PC-3 (cell line): ENCODE measurements at regions of chr12 and their contacts with region 1.

Region 1: DNA sequence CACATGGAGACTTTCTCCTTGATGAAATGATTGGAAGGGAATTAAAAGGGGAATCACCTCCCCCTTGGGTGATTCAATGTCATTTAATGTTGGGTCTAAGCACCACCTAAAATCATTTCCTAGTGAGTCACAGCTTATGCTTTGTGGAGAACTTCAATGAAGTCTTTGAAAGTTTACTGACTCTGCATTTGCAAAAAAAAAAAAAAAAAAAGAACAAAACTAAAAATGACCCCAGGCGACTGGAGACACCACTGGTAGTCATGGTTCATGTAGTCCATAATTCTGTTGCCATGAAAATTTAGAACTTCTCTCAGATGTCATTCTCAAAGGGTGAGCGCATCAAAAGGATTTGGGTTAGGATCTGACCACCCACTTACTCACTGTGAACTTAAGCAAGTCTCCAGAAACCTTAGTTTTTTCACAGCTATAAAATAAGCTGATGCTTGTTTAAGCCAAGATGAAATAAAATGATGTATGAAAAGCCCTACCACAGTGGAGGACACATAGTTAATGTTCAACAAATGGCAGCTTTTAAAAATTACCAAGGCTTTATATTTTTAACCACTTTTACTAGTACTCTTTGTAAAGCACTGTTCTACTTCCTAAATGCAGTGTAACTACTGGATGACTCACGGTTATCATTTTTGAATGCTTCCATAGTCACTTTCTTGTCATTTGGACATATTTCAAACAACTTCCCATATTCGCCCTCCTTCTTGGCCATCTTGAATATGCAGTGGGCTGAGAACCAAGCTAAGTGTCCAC is 18.1 kb upstream of the KSR2 start:
- DNase-seq: peak; percentile 94
- ATAC-seq: peak; percentile 81
- H3K4me3 ChIP-seq: peak overlapping the region; percentile 14; the same call in 1 of the 2 replicates
- H3K27ac ChIP-seq: peak overlapping the region; percentile 91
- H3K4me1 ChIP-seq: peaks cover 36% of the 10 kb centered on the region
- H3K27me3 ChIP-seq: no peaks in the 10 kb centered on the region
- CTCF ChIP-seq: no peak

Region 2: DNA sequence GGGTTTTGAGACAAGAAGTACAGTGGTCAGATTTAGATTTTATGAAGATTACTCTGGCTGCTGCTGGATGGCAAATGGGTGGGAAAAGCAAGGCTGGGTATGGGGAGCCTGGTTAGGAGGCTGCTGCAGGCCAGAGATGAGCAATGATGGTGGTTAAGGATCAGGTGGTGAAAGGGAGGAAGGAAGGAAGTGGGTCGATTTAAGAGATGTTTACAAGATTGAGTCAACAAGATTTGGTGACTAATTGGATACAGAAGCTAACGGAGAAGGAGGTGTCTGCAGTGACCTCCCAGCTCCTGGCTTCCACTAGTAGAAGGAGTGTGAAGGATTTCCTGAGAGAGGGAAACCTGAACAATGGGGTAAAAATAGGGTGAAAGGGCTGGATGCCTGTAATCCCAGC is 644.2 kb before region 1 on chr12:
- CTCF ChIA-PET with region 1: no interaction called
- POLR2A ChIA-PET with region 1: interaction called, 29 read pairs
- intact Hi-C with region 1: no loop called
- DNase-seq: peak; percentile 96
- ATAC-seq: peak; percentile 94
- H3K4me3 ChIP-seq: no peak overlapping the region
- H3K27ac ChIP-seq: peak overlapping the region; percentile 77
- H3K4me1 ChIP-seq: peaks cover 32% of the 10 kb centered on the region
- H3K27me3 ChIP-seq: peaks cover 12% of the 10 kb centered on the region
- CTCF ChIP-seq: no peak

Region 3: DNA sequence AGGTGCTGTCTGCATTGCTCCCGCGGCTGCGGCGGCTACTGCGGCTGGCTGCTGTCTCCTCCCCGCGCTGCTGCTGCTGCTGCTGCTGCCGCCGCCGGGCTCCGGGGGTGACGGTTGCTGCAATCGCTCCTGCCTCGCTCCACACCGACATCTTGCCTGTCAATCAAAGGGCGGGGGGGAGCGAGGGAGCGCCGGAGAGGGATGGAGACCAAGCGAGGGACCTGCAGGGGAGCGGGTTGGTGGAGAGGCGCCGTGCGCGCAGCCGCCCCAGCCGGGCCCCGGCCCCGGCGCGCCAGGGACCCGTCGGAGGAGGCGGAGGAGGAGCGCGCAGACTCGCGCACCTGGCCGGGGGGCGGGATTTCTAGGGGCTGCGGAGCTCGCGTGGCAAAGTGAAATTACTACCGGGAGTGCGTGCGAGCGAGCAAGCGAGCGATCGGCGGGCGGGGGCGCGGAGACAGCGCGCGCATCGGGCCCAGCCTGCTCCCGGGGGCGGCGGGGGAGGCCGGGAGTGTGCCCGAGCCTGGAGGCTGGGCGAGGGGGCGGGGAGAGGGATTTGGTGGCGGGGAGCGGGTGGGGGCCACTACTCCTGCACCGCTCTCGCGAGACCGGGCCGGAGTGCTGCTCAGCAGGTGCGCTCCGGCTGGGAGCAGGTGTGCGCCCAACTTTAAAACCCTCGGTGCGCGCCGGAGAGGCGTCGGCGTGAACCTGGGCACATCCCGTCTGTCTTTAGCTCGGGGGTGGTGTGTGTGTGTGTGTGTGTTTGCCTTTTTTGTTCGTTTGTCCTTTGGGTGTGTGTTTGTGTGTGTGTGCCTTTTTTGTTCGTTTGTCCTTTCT is 17.8 kb before region 1 on chr12 and contains the start of gene KSR2:
- CTCF ChIA-PET with region 1: no interaction called
- POLR2A ChIA-PET with region 1: interaction called, 6 read pairs
- intact Hi-C with region 1: loop called (anchors 2 kb)
- DNase-seq: peak; percentile 92
- ATAC-seq: peak; percentile 91
- H3K4me3 ChIP-seq: peak within 1 kb of the TSS; percentile 89
- H3K27ac ChIP-seq: peak within 1 kb of the TSS; percentile 68
- H3K4me1 ChIP-seq: peaks cover 24% of the 10 kb centered on the region
- H3K27me3 ChIP-seq: no peaks in the 10 kb centered on the region
- CTCF ChIP-seq: no peak
- total RNA-seq, gene KSR2: 0.80 and 2.8 TPM in 2 replicates

Region 4: DNA sequence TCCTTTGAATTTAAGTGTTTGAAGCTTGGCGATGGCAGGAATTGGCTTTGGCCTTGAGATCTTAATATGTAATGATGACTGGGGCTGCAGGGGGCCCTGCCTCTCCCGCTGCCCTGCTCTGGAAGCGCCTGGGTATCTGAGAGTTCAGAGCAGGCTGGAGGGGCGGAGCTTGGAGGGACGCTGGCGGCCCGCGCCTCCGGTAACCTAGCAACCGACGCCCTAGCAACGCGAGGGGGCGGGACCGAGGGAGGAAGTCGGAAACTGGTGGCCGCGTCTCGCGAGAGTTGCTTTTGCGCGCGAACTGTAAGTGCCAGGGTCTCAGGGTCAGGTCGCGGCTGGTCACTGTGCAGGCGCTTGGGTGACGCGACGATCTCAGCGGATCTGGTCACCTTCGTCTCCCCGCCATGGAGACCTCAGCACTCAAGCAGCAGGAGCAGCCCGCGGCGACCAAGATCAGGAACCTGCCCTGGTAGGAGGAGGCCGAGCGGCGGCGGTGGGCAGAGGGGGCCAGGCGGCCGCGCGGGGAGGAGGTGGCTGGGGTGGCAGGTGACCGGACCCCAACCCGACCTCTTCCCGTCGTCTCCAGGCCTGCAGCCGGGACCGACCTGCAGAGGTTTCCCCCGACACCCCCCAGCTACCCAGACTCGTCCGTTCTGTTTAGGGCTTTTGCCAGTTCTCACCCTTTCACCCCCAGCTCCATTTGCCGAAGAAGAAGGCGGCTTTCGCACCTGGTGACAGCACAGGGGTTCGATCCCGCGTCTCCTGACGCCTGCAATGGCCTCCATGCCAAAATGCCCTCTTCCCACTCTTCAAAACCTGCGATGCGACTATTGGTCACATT is 29.8 kb after region 1 on chr12 and contains the start of gene RFC5:
- CTCF ChIA-PET with region 1: no interaction called
- POLR2A ChIA-PET with region 1: no interaction called
- intact Hi-C with region 1: loop called (anchors 2 kb)
- DNase-seq: peak; percentile 99
- ATAC-seq: peak; percentile 99
- H3K4me3 ChIP-seq: peak within 1 kb of the TSS; percentile 95
- H3K27ac ChIP-seq: peak within 1 kb of the TSS; percentile 17
- H3K4me1 ChIP-seq: peaks cover 18% of the 10 kb centered on the region
- H3K27me3 ChIP-seq: no peaks in the 10 kb centered on the region
- CTCF ChIP-seq: no peak
- total RNA-seq, gene RFC5: 86.4 and 100 TPM in 2 replicates

Region 5: GRCh38 chr12:118055144-118055557 is 68.3 kb after region 1 on chr12:
- CTCF ChIA-PET with region 1: no interaction called
- POLR2A ChIA-PET with region 1: interaction called, 27 read pairs
- intact Hi-C with region 1: no loop called
- DNase-seq: peak; percentile 78
- ATAC-seq: no peak
- H3K4me3 ChIP-seq: no peak overlapping the region
- H3K27ac ChIP-seq: no peak overlapping the region
- H3K4me1 ChIP-seq: peaks cover 64% of the 10 kb centered on the region
- H3K27me3 ChIP-seq: no peaks in the 10 kb centered on the region
- CTCF ChIP-seq: peak; percentile 91

Region 6: DNA sequence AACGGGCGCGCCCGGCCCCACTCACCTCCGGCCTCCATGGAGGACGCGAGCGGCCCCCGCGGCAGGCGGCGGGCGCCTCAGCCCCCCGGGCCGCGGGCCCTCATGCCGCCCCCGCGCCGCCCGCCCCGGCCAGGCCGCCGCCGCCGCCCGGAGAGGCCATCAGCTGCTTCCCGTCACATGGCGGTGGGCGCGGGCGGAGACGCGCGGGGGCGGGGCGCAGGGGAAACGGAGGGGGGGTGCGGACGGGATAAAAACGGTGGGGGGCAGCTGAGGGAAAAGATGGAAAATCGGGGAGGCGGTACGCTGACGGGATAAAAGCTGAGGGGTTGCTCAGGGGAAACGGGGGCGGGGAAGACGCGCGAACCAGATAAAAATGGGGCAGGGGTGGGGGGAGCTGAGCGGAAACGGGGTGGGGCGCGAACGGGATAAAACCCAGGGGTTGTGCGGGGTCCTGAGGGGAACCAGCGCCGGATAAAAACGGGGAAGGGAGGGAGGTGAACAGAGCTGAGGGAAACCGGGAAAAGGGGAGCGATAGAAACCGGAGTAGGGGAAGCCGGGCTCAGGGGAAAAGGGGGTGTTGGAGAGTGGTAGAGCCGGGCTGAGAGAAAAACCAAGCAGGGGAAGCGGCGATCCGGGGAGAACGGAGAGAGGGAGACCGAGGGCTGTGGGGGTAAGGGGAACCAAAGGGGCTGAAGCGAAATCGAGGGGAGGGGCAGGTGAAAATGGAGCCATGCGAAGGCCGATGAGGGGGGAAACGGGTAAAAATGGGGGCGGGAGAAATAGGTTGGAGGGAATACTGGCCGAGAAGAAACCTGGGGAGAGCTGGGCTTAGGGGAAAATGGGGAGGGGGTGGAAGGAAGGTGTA is 74.4 kb after region 1 on chr12 and contains the start of gene WSB2:
- CTCF ChIA-PET with region 1: no interaction called
- POLR2A ChIA-PET with region 1: interaction called, 27 read pairs
- intact Hi-C with region 1: no loop called
- DNase-seq: peak; percentile 41
- ATAC-seq: peak; percentile 6
- H3K4me3 ChIP-seq: peak within 1 kb of the TSS; percentile 93
- H3K27ac ChIP-seq: peak within 1 kb of the TSS; percentile 86
- H3K4me1 ChIP-seq: peaks cover 40% of the 10 kb centered on the region
- H3K27me3 ChIP-seq: no peaks in the 10 kb centered on the region
- CTCF ChIP-seq: no peak
- total RNA-seq, gene WSB2: 166 and 203 TPM in 2 replicates

Region 7: GRCh38 chr12:118290130-118290529 is 303.2 kb after region 1 on chr12:
- CTCF ChIA-PET with region 1: no interaction called
- POLR2A ChIA-PET with region 1: no interaction called
- intact Hi-C with region 1: no loop called
- DNase-seq: no peak
- ATAC-seq: no peak
- H3K4me3 ChIP-seq: no peak overlapping the region
- H3K27ac ChIP-seq: no peak overlapping the region
- H3K4me1 ChIP-seq: no peaks in the 10 kb centered on the region
- H3K27me3 ChIP-seq: no peaks in the 10 kb centered on the region
- CTCF ChIP-seq: no peak

Region 8: DNA sequence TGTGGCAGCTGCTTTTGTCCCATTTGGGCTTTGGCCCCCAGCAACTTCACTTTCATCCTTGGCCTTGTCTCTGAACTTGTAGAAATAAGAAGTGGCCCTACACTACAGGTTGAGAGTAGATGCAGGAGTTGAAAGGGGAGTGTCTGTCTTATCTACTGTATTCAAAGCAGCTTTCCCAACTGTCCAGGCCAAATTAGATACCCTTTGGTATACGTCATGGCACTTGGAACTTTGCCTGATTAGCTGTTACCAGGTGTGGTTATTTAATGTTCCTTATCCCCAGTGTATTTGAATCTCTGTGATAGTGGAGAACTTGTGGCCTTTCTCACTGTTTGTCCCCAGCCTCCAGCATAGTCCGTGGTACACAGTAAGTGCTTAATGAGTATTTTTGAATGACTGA is 422.9 kb after region 1 on chr12:
- CTCF ChIA-PET with region 1: no interaction called
- POLR2A ChIA-PET with region 1: no interaction called
- intact Hi-C with region 1: no loop called
- DNase-seq: no peak
- ATAC-seq: no peak
- H3K4me3 ChIP-seq: no peak overlapping the region
- H3K27ac ChIP-seq: no peak overlapping the region
- H3K4me1 ChIP-seq: no peaks in the 10 kb centered on the region
- H3K27me3 ChIP-seq: no peaks in the 10 kb centered on the region
- CTCF ChIP-seq: no peak